ENCODE measurements at regions of chr18 and their contacts with region 1.

Region 1: GRCh38 chr18:21831413-21831831 is 90.8 kb downstream of the MIB1 start:
- DNase-seq: no peak
- ATAC-seq: no peak
- H3K4me3 Mint-ChIP-seq: no peak overlapping the region
- H3K27ac Mint-ChIP-seq: no peak overlapping the region
- H3K4me1 Mint-ChIP-seq: peaks cover under 1% of the 10 kb centered on the region
- H3K27me3 Mint-ChIP-seq: no peaks in the 10 kb centered on the region
- CTCF ChIP-seq: no peak

Region 2: GRCh38 chr18:21777814-21778213 is 53.6 kb before region 1 on chr18:
- CTCF ChIA-PET with region 1: no interaction called
- POLR2A ChIA-PET with region 1: no interaction called
- intact Hi-C with region 1: loop called (anchors 10 kb)
- DNase-seq: no peak
- ATAC-seq: no peak
- H3K4me3 Mint-ChIP-seq: no peak overlapping the region
- H3K27ac Mint-ChIP-seq: no peak overlapping the region
- H3K4me1 Mint-ChIP-seq: no peaks in the 10 kb centered on the region
- H3K27me3 Mint-ChIP-seq: no peaks in the 10 kb centered on the region
- CTCF ChIP-seq: no peak

Region 3: GRCh38 chr18:21968338-21968737 is 136.9 kb after region 1 on chr18:
- CTCF ChIA-PET with region 1: no interaction called
- POLR2A ChIA-PET with region 1: no interaction called
- intact Hi-C with region 1: no loop called
- DNase-seq: no peak
- ATAC-seq: no peak
- H3K4me3 Mint-ChIP-seq: no peak overlapping the region
- H3K27ac Mint-ChIP-seq: no peak overlapping the region
- H3K4me1 Mint-ChIP-seq: no peaks in the 10 kb centered on the region
- H3K27me3 Mint-ChIP-seq: no peaks in the 10 kb centered on the region
- CTCF ChIP-seq: no peak

Measured in activated B cell treated with CpG ODN at 0.5 μM for 24 hours (primary cell).